A549 (cell line): ENCODE measurements at regions of chr16 and their contacts with region 1.

Region 1: GRCh38 chr16:19094541-19095365 is 19.0 kb upstream of the ITPRIPL2 start:
- DNase-seq: peak in 1 of 2 experiments; percentile 91
- ATAC-seq: peak; percentile 91 to 94
- H3K4me3 ChIP-seq: peak overlapping the region; percentile 33
- H3K27ac ChIP-seq: peak overlapping the region; percentile 73 to 87
- H3K4me1 ChIP-seq: peaks cover 38% of the 10 kb centered on the region
- CTCF ChIP-seq: peak; percentile 50
- EP300 ChIP-seq: no peak
- POLR2A ChIP-seq: no peak
- RAD21 ChIP-seq: peak; percentile 35 to 40; a peak in 3 of 5 replicates

Region 2: GRCh38 chr16:19105891-19106624 is 11.3 kb after region 1 on chr16:
- CTCF ChIA-PET with region 1: interaction called, 114 read pairs
- POLR2A ChIA-PET with region 1: no interaction called
- DNase-seq: no peak
- ATAC-seq: no peak
- H3K4me3 ChIP-seq: no peak overlapping the region
- H3K27ac ChIP-seq: peak overlapping the region in 1 of 2 experiments; percentile 82; a peak in 3 of 6 replicates
- H3K4me1 ChIP-seq: peaks cover 27% of the 10 kb centered on the region
- CTCF ChIP-seq: no peak
- EP300 ChIP-seq: no peak
- POLR2A ChIP-seq: no peak
- RAD21 ChIP-seq: no peak

Region 3: DNA sequence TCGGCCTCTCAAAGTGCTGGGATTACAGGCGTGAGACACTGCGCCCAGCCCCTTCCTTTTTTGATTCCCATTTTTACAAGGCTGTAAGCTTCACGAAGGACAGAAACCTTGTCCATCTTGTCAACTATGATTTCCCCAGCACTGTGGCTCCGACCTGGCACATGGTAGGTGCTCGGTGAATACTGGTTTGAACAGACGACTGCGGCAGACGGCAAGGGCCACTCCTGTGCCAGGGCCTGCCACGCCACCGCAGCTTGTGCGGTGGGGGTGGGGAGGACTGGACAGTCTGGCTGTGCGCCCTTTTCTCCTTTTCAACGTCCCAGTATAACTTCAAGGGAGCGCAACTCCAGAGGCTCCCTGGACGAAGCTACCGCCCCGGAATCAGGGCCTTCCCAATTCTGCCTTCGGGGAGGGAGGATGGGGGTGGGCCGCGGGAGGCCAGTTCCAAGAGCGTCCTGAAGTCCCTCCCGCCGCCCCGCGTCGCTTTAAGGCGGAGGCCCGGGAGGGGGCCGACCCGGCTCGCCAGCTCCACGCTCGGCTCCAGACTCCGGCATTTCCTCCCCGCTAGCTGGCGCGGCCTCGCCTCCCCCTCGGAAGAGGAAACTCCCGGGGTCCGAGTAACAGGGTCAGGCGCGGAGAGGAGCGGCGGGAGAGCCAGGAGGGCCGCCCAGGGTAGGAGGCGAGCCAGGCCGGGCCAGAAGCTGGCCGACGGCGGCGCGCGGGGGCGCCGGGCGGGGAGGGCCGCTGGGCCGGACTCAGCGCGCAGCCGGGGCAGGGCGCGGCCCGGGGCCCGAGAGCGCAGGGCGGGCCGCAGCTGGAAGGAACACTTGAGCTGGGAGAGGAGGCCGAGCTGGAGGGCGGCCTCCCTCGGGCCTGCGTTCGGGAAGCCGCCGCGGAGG is 18.9 kb after region 1 on chr16 and contains the start of gene ITPRIPL2:
- CTCF ChIA-PET with region 1: interaction called, 114 read pairs
- POLR2A ChIA-PET with region 1: interaction called, 16 read pairs
- DNase-seq: peak; percentile 85 to 93
- ATAC-seq: peak; percentile 85
- H3K4me3 ChIP-seq: peak within 1 kb of the TSS; percentile 67
- H3K27ac ChIP-seq: peak within 1 kb of the TSS; percentile 92 to 96
- H3K4me1 ChIP-seq: peaks cover 70% of the 10 kb centered on the region
- CTCF ChIP-seq: no peak
- EP300 ChIP-seq: no peak
- POLR2A ChIP-seq: peak; percentile 60
- RAD21 ChIP-seq: peak in 1 of 2 experiments; percentile 38; a peak in 2 of 5 replicates
- polyA plus RNA-seq, gene ITPRIPL2: 17.5 and 18.3 TPM in 2 replicates

Region 4: DNA sequence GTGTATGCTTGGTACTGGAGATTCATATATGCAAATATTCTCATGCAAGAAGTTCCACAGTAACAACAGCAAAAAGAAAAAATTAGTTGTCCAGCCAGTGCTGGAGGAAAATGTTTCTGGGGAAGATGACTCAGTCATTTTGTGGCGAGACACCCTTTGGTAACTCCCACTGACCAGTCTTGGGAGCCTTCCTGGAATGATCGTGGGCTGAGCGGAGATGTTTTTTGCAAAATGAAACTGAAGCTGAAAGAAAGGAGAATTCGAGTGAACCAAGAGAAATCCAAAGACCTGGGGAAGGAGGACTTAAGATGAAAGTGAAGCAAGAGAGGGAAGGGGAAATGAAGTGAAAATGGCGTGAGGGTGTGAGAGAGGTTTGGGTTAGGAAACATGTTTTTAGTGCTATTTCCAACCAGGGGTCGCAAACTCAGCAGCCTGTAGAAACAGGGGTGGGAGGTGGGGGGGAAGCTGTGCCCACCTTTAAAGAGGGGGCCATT is 24.2 kb after region 1 on chr16:
- CTCF ChIA-PET with region 1: interaction called, 114 read pairs
- POLR2A ChIA-PET with region 1: interaction called, 16 read pairs
- DNase-seq: peak; percentile 71 to 82
- ATAC-seq: peak in 1 of 2 experiments; percentile 45; a peak in 3 of 6 replicates
- H3K4me3 ChIP-seq: peak overlapping the region; percentile 24
- H3K27ac ChIP-seq: peak overlapping the region; percentile 90
- H3K4me1 ChIP-seq: peaks cover 91% of the 10 kb centered on the region
- CTCF ChIP-seq: no peak
- EP300 ChIP-seq: no peak
- POLR2A ChIP-seq: no peak
- RAD21 ChIP-seq: 0 out of 5 replicates have a peak, but pooled peaks of 1 of the 2 experiments have one; percentile 4

Region 5: GRCh38 chr16:19138601-19139000 is 43.8 kb after region 1 on chr16:
- CTCF ChIA-PET with region 1: interaction called, 13 read pairs
- POLR2A ChIA-PET with region 1: no interaction called
- DNase-seq: peak; percentile 60 to 84
- ATAC-seq: peak; percentile 40 to 64; a peak in 4 of 6 replicates
- H3K4me3 ChIP-seq: no peak overlapping the region
- H3K27ac ChIP-seq: peak overlapping the region; percentile 76 to 85
- H3K4me1 ChIP-seq: peaks cover 60% of the 10 kb centered on the region
- CTCF ChIP-seq: no peak
- EP300 ChIP-seq: no peak
- POLR2A ChIP-seq: no peak
- RAD21 ChIP-seq: no peak

Region 6: GRCh38 chr16:19167710-19168370 is 73.1 kb after region 1 on chr16 and contains the start of gene SYT17:
- CTCF ChIA-PET with region 1: interaction called, 10 read pairs
- POLR2A ChIA-PET with region 1: no interaction called
- DNase-seq: peak; percentile 80 to 90
- ATAC-seq: peak; percentile 94 to 95
- H3K4me3 ChIP-seq: peak within 1 kb of the TSS; percentile 84
- H3K27ac ChIP-seq: peak within 1 kb of the TSS; percentile 91 to 96
- H3K4me1 ChIP-seq: peaks cover 26% of the 10 kb centered on the region
- CTCF ChIP-seq: peak; percentile 97
- EP300 ChIP-seq: no peak
- POLR2A ChIP-seq: peak; percentile 36; the same call in 1 of the 2 replicates
- RAD21 ChIP-seq: peak; percentile 80 to 96
- polyA plus RNA-seq, gene SYT17: 18.7 and 28.1 TPM in 2 replicates

Region 7: GRCh38 chr16:19375561-19376158 is 280.9 kb after region 1 on chr16:
- CTCF ChIA-PET with region 1: interaction called, 151 read pairs
- POLR2A ChIA-PET with region 1: interaction called, 5 read pairs
- DNase-seq: peak; percentile 70 to 73
- ATAC-seq: peak; percentile 81 to 91; a peak in 5 of 6 replicates
- H3K4me3 ChIP-seq: no peak overlapping the region
- H3K27ac ChIP-seq: no peak overlapping the region
- H3K4me1 ChIP-seq: no peaks in the 10 kb centered on the region
- CTCF ChIP-seq: peak; percentile 98
- EP300 ChIP-seq: no peak
- POLR2A ChIP-seq: no peak
- RAD21 ChIP-seq: peak; percentile 98 to 99